ENCODE measurements at regions of chr12 and their contacts with region 1.

Region 1: DNA sequence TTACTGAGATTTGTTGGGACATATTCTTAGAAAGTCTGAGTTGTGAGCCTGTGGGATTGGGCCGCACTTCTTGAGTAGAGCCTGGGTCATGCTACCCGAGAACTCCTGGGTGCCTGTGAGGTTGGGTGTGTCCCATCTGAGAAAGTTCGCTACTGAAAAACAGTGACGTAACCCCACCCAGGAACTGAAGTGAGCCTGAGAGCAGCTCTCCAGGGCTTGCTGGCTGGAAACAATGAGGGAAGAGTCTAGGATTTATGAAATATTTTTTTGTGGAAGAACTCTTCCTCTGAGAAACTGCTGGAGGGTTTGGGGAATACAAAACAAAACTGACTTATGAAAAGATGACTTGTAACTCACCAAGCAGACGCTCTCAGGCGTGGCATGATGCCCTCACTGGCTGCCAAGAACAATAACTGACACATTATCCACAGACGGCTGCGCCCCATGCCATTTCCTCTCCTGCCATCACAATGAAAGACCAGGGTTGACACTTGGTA is 69.2 kb downstream of the RASSF3 start:
- DNase-seq: peak; percentile 38 to 53 (median 49)
- ATAC-seq: no peak
- H3K4me3 ChIP-seq: no peak overlapping the region
- H3K27ac ChIP-seq: peak overlapping the region in 2 of 4 donors; percentile 23 to 56
- H3K4me1 ChIP-seq: peaks cover 57% of the 10 kb centered on the region
- H3K27me3 ChIP-seq: no peaks in the 10 kb centered on the region
- CTCF ChIP-seq: no peak
- POLR2A ChIP-seq: no peak

Region 2: GRCh38 chr12:64610149-64610678 is 69.3 kb before region 1 on chr12 and contains the start of gene RASSF3:
- intact Hi-C with region 1: loop called (anchors 10 kb)
- DNase-seq: peak; percentile 71 to 82 (median 72)
- ATAC-seq: peak; percentile 88
- H3K4me3 ChIP-seq: peak within 1 kb of the TSS; percentile 57 to 97
- H3K27ac ChIP-seq: peak within 1 kb of the TSS; percentile 43 to 89 (median 84)
- H3K4me1 ChIP-seq: peaks cover 16% of the 10 kb centered on the region
- H3K27me3 ChIP-seq: no peaks in the 10 kb centered on the region
- CTCF ChIP-seq: no peak
- POLR2A ChIP-seq: peak; percentile 37 to 52 (median 51)
- total RNA-seq, gene RASSF3: 13.5 to 21.3 TPM

Region 3: GRCh38 chr12:64744422-64745258 is 65.1 kb after region 1 on chr12:
- intact Hi-C with region 1: no loop called
- DNase-seq: no peak
- ATAC-seq: peak; percentile 69
- H3K4me3 ChIP-seq: no peak overlapping the region
- H3K27ac ChIP-seq: peak overlapping the region in 3 of 4 donors; percentile 53 to 74 (median 58)
- H3K4me1 ChIP-seq: peaks cover 14% of the 10 kb centered on the region
- H3K27me3 ChIP-seq: no peaks in the 10 kb centered on the region
- CTCF ChIP-seq: no peak
- POLR2A ChIP-seq: no peak